Motor neuron (in vitro differentiated cells): ENCODE measurements at regions of chr15 and their contacts with region 1.

Region 1: DNA sequence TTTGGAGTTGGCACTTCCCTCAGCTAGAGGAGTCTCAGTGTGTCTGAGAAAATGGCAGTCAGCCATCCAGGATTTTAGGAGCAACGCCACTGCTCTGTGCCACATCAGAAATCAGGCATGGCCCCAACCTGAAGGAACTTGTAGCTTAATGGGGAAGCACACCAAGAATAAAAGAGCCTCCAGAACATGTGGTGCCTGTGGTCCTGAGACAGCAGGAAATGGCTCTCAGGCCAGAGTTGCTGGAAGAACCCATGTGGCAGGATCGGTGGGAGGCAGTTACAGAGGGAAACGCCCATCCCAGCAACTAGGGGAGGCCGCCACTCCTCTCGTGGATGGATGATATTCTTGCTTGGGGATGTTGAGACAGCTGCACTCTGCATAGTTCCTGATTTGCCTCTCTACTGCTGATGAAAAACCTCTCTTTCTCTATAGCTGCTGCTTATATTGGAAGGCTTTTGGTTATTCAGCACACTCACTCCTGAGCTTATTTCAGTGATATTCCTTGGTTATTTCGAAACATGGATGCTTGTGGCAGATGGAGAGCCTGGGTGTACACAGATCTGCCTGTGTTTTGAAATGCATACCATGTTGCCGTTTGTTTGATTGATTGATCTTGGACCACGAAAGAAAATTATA is 52.4 kb downstream of the KLHL25 start:
- ATAC-seq: peak; percentile 66 to 95 (median 83)
- H3K4me3 ChIP-seq: no peak overlapping the region
- H3K27ac ChIP-seq: peak overlapping the region in 1 of 2 donors; percentile 32
- H3K4me1 ChIP-seq: peaks cover 12 to 28% of the 10 kb centered on the region in 2 donors

Region 2: DNA sequence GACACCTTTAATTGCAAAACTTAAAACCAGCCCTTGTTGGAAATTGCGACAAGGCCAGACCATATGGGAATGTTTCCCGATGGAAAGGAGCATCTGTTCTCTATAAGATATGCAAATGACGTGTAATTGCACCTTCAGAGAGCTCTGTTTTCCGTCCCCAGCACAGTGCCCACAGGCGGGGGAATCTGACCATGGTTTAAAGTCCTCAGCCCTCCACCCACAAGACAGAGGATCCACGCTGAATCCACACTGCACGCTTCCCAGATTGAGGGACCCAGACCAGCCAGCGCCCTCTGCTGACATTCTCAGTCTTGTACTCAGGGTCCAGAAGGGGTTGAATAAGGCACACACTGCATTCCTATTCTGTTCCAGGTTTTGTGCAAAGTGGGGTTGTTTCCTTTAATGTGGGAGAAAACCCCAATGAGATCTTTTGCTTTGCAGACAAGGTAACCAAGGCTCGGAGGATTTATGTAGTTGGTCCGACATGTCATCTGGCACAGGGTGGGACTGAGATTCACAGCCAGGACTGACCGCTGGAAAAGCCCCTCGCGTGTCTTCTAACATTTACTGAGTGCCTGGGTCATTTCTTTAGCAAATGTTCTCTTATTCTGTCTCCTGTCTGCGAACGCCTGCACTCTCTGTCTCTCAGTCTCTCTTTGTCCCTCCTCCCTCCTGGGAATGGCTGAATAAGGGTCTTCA is 89.3 kb after region 1 on chr15:
- in situ Hi-C with region 1: loop called (anchors 10 to 25 kb)
- ATAC-seq: peak; percentile 76 to 99 (median 89)
- H3K4me3 ChIP-seq: no peak overlapping the region
- H3K27ac ChIP-seq: no peak overlapping the region
- H3K4me1 ChIP-seq: peaks cover 3 to 10% of the 10 kb centered on the region in 2 donors